ENCODE measurements at regions of chr3 and their contacts with region 1.

Region 1: DNA sequence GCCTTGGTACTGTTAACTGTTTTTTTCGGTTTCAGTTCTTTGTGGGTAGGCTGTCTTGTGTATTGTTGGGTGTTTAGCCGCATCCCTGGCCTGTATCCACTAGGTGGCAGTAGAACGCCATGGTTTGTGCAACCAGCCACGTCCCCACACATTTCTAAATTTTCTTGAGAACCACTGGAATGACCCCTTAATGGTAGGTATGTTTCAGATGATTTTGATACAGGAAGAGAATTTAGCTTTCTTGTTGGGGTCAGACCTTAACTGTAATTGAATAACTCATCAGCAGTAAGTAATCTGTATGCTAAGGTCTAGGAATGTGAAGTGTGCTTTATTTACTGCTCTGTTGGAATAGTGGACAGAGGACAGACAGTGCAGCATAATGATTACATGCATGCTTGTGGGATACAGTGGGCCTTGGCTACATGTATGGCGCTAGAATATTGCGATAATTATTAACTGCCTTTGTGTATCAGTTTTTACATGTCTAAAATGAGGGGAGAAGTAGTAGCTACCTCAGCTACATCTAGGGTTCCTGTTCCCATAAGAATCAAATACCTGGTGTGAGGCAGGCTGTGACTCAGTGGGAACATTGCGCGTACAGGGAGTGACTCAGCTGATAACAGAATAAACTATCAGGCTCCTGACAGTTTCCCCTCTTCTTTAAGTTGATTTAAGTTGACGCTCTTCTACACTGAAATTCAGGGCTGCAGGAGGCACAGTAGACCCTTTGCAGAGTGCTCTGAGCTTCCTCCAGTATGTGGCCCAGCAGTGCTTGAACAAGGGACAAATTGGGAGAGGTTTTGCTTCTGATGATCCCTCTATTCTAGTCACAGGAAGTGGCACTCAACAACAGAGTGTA is 25.0 kb upstream of the GPR171 start:
- DNase-seq: peak; percentile 47 to 84 (median 77)
- ATAC-seq: peak; percentile 93
- H3K4me3 ChIP-seq: no peak overlapping the region
- H3K4me3 Mint-ChIP-seq: peak overlapping the region in 7 of 10 donors; percentile 6 to 68 (median 35)
- H3K27ac ChIP-seq: no peak overlapping the region
- H3K27ac Mint-ChIP-seq: peak overlapping the region in 8 of 9 donors; percentile 6 to 84 (median 51)
- H3K4me1 ChIP-seq: peaks cover 0 to 9% of the 10 kb centered on the region in 2 donors
- H3K4me1 Mint-ChIP-seq: peaks cover 19 to 63% (median 43%) of the 10 kb centered on the region in 7 donors
- H3K27me3 ChIP-seq: no peaks in the 10 kb centered on the region
- H3K27me3 Mint-ChIP-seq: no peaks in the 10 kb centered on the region

Region 2: DNA sequence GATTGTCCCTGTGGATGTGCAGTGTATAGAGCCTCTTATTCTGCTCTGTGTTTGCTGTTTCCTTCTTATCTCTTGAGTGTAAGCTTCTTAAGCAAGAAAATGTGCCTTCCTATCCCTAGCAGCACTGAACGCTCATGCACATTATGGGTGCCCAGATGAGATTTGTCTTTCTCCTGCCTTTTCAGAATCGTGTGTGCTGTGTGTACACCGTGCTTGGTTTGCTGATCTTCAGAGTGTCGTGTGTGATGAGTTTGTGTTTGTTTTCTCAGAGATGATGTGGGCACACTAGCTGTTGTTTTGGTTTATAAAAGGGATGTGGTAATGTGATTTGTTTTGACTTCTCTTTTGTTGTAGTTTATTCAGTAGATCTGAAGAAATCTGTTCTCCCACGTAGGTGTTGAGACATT is 44.8 kb before region 1 on chr3:
- CTCF ChIA-PET with region 1: interaction called, 3 read pairs
- POLR2A ChIA-PET with region 1: interaction called, 5 read pairs
- intact Hi-C with region 1: loop called in 1 of 2 experiments (anchors 1 kb)
- DNase-seq: peak in 4 of 9 donors; percentile 13 to 65 (median 54)
- ATAC-seq: peak; percentile 69
- H3K4me3 ChIP-seq: no peak overlapping the region
- H3K4me3 Mint-ChIP-seq: peak overlapping the region; percentile 58 to 85 (median 78)
- H3K27ac ChIP-seq: peak overlapping the region; percentile 38
- H3K27ac Mint-ChIP-seq: peak overlapping the region; percentile 66 to 90 (median 83)
- H3K4me1 ChIP-seq: peaks cover 4 to 15% of the 10 kb centered on the region in 2 donors
- H3K4me1 Mint-ChIP-seq: peaks cover 20 to 60% (median 44%) of the 10 kb centered on the region in 7 donors
- H3K27me3 ChIP-seq: no peaks in the 10 kb centered on the region
- H3K27me3 Mint-ChIP-seq: peaks cover 0 to 4% (median 0%) of the 10 kb centered on the region in 5 donors

Region 3: DNA sequence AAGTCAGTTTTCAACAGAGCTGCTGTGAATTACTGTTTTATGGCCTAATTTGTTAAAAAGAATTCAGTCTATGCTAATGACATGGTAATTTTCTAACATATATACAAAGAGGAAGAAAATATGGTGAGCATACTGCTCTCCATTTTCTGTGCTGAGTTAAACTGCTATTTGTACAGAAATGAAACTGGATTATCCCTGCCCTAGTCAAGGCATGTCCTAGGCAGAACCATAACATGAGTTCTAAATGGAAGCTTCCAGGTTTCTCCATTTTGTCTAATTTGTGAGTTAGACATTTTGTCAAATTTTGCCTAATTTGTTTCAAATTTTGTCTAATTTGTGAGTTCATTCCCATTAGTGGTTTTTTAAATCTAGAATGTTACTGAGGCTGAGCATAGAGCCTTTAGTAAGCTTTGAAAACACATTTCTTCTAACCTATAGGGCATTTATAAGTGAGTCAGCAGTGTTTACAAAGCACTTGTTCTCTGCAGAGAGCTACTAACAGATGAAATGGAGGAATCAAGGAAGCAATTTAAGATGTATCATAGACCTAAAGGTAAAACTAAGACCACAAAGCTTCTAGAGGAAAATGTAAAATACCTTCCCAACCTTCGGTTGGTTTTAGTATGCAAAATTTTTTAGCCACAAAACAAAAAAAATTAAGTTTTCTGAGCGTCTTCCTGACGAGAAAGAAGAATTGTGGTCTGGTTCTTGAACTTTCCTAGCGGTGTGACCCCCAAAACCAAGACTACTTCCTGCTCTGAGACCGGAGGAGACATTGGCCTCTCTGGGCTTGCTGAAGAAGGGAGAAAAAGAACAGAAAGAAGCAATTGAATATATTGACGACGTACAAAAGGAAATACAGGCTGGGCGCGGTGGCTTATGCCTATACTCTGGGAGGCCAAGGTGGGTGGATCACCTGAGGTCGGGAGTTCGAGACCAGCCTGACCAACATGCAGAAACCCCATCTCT is 40.5 kb after region 1 on chr3:
- CTCF ChIA-PET with region 1: no interaction called
- POLR2A ChIA-PET with region 1: no interaction called
- intact Hi-C with region 1: loop called in 1 of 2 experiments (anchors 2 kb)
- DNase-seq: peak in 5 of 9 donors; percentile 15 to 52 (median 23)
- ATAC-seq: peak; percentile 39
- H3K4me3 ChIP-seq: no peak overlapping the region
- H3K4me3 Mint-ChIP-seq: peak overlapping the region in 9 of 10 donors; percentile 28 to 84 (median 70)
- H3K27ac ChIP-seq: peak overlapping the region; percentile 1
- H3K27ac Mint-ChIP-seq: peak overlapping the region; percentile 70 to 92 (median 83)
- H3K4me1 ChIP-seq: no peaks in the 10 kb centered on the region
- H3K4me1 Mint-ChIP-seq: peaks cover 8 to 58% (median 22%) of the 10 kb centered on the region in 7 donors
- H3K27me3 ChIP-seq: no peaks in the 10 kb centered on the region
- H3K27me3 Mint-ChIP-seq: peaks cover 0 to 4% (median 0%) of the 10 kb centered on the region in 5 donors

Region 4: DNA sequence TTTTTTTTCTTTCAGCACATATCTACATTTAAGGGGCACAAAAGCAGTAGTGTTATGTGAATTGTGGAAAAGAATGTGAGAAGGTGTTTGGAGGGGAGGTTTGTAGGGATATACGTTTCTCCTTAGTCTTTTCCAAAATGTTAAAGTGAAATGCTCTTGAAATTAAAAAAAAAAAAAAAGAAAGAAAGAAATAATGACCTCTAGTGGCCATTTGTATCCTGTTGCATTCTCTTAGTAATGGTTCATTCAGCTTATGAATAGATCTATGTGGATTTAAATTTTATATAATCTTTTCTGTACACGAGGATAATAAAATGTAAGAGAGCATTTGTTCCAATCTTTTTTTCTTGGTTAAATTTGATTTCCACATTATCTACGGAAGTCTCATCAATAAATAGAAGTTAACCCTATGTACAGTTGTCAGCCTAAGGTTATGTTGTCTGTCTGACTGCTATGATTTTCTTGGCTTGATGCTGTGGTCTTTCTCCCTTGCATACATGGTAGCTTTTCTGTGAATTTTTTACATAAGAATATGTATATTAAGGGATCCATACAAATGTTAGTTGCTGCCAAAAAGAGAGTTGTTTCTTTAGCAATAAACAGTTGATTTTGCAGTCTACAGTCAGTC is 99.6 kb after region 1 on chr3:
- CTCF ChIA-PET with region 1: interaction called, 6 read pairs
- POLR2A ChIA-PET with region 1: no interaction called
- intact Hi-C with region 1: loop called (anchors 1 kb)
- DNase-seq: no peak
- ATAC-seq: no peak
- H3K4me3 ChIP-seq: no peak overlapping the region
- H3K4me3 Mint-ChIP-seq: no peak overlapping the region
- H3K27ac ChIP-seq: no peak overlapping the region
- H3K27ac Mint-ChIP-seq: no peak overlapping the region
- H3K4me1 ChIP-seq: no peaks in the 10 kb centered on the region
- H3K4me1 Mint-ChIP-seq: peaks cover 4 to 7% (median 6%) of the 10 kb centered on the region in 7 donors
- H3K27me3 ChIP-seq: no peaks in the 10 kb centered on the region
- H3K27me3 Mint-ChIP-seq: peaks cover 10 to 30% (median 19%) of the 10 kb centered on the region in 5 donors

Region 5: GRCh38 chr3:151838583-151839312 is 610.7 kb after region 1 on chr3:
- CTCF ChIA-PET with region 1: interaction called, 4 read pairs
- POLR2A ChIA-PET with region 1: no interaction called
- intact Hi-C with region 1: loop called (anchors 1 to 2 kb)
- DNase-seq: peak in 6 of 9 donors; percentile 6 to 40 (median 26)
- ATAC-seq: peak; percentile 70
- H3K4me3 ChIP-seq: no peak overlapping the region
- H3K4me3 Mint-ChIP-seq: no peak overlapping the region
- H3K27ac ChIP-seq: no peak overlapping the region
- H3K27ac Mint-ChIP-seq: no peak overlapping the region
- H3K4me1 ChIP-seq: no peaks in the 10 kb centered on the region
- H3K4me1 Mint-ChIP-seq: peaks cover 0 to 3% (median 0%) of the 10 kb centered on the region in 7 donors
- H3K27me3 ChIP-seq: no peaks in the 10 kb centered on the region
- H3K27me3 Mint-ChIP-seq: peaks cover 6 to 42% (median 11%) of the 10 kb centered on the region in 5 donors

Measured in naive thymus-derived CD4-positive, alpha-beta T cell (primary cell).